Ascending aorta (tissue), 2 donors: ENCODE measurements at regions of chr19 and their contacts with region 1.

Region 1: DNA sequence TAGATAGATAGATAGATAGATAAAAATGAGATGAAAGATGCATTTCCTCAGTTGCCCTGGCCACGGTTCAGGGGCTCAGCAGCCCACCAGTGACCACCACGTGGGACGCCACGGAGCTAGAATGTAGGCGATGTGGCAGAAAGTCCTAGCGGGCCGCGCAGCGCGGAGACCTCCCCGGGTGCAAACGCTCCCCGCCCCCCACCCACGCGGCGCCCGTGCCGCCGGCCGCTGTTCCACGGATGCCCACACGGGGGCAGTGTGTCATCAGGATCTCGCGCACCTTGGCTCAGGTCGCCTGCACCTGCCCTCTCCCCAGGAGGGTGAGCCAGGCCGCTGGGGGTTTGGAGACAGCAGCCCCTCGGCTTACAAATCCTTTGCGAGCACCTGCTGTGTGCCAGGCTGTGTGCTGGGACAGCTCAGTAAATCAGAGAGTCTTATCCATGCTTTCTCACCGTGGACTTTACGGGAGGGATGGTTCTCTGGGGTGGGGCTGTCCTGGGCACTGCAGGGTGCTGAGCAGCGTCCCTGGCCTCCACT is 13.7 kb upstream of the TLE5 start:
- DNase-seq: no peak
- H3K4me3 ChIP-seq: no peak overlapping the region
- H3K27ac ChIP-seq: no peak overlapping the region
- H3K4me1 ChIP-seq: peaks cover 0 to 13% of the 10 kb centered on the region in 2 donors
- H3K27me3 ChIP-seq: no peaks in the 10 kb centered on the region
- CTCF ChIP-seq: peak; percentile 94 to 97 (median 97)

Region 2: GRCh38 chr19:1122972-1123363 is 1953.0 kb before region 1 on chr19:
- intact Hi-C with region 1: no loop called
- DNase-seq: no peak
- H3K4me3 ChIP-seq: no peak overlapping the region
- H3K27ac ChIP-seq: peak overlapping the region in 1 of 2 donors; percentile 33
- H3K4me1 ChIP-seq: peaks cover 0 to 13% of the 10 kb centered on the region in 2 donors
- H3K27me3 ChIP-seq: no peaks in the 10 kb centered on the region
- CTCF ChIP-seq: no peak

Region 3: GRCh38 chr19:3108775-3109174 is 32.8 kb after region 1 on chr19:
- intact Hi-C with region 1: loop called (anchors 1 kb)
- DNase-seq: no peak
- H3K4me3 ChIP-seq: no peak overlapping the region
- H3K27ac ChIP-seq: no peak overlapping the region
- H3K4me1 ChIP-seq: peaks cover 2 to 9% of the 10 kb centered on the region in 2 donors
- H3K27me3 ChIP-seq: no peaks in the 10 kb centered on the region
- CTCF ChIP-seq: peak; percentile 67 to 80 (median 74)

Region 4: DNA sequence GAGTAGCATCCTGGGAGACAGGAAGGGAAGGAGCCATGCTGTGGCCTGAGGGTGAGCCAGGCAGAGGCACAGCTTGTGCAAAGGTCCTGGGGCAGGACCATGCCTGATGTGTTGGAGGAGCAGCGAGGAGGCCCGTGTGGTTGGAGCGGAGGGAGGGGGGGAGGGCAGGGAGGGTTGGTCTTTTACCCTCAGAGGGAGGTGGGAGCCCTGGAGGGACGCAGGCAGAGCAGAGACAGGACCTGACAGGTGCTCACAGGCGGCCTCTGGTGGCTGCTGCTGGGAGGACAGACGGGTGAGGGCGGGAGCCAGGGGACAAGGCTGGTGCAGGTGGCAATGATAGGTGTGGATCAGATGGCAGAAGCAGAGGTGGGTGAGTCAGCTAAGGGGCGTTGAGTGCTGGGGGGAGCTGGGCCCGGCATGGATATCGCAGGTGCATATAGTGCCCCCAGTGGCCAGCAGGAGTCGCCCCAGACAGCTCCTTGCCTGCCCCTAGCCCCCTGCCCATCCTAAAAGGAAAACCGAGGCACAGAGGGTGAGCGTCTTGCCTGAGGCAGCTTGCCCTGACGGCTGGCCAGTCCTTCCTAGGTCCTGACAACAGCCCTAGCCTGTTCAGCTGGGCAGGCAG is 50.0 kb after region 1 on chr19:
- intact Hi-C with region 1: loop called (anchors 1 kb)
- DNase-seq: peak in 1 of 2 donors; percentile 74
- H3K4me3 ChIP-seq: no peak overlapping the region
- H3K27ac ChIP-seq: no peak overlapping the region
- H3K4me1 ChIP-seq: no peaks in the 10 kb centered on the region
- H3K27me3 ChIP-seq: no peaks in the 10 kb centered on the region
- CTCF ChIP-seq: peak; percentile 51 to 82 (median 80)

Region 5: GRCh38 chr19:3163230-3163886 is 87.4 kb after region 1 on chr19:
- intact Hi-C with region 1: loop called (anchors 2 kb)
- DNase-seq: no peak
- H3K4me3 ChIP-seq: no peak overlapping the region
- H3K27ac ChIP-seq: no peak overlapping the region
- H3K4me1 ChIP-seq: no peaks in the 10 kb centered on the region
- H3K27me3 ChIP-seq: no peaks in the 10 kb centered on the region
- CTCF ChIP-seq: peak; percentile 84 to 97 (median 90)

Region 6: GRCh38 chr19:3210347-3211017 is 134.5 kb after region 1 on chr19:
- intact Hi-C with region 1: no loop called
- DNase-seq: peak in 1 of 2 donors; percentile 72
- H3K4me3 ChIP-seq: no peak overlapping the region
- H3K27ac ChIP-seq: no peak overlapping the region
- H3K4me1 ChIP-seq: no peaks in the 10 kb centered on the region
- H3K27me3 ChIP-seq: no peaks in the 10 kb centered on the region
- CTCF ChIP-seq: peak in 2 of 3 experiments; percentile 32 to 58